ENCODE measurements at regions of chr6 and their contacts with region 1.

Region 1: DNA sequence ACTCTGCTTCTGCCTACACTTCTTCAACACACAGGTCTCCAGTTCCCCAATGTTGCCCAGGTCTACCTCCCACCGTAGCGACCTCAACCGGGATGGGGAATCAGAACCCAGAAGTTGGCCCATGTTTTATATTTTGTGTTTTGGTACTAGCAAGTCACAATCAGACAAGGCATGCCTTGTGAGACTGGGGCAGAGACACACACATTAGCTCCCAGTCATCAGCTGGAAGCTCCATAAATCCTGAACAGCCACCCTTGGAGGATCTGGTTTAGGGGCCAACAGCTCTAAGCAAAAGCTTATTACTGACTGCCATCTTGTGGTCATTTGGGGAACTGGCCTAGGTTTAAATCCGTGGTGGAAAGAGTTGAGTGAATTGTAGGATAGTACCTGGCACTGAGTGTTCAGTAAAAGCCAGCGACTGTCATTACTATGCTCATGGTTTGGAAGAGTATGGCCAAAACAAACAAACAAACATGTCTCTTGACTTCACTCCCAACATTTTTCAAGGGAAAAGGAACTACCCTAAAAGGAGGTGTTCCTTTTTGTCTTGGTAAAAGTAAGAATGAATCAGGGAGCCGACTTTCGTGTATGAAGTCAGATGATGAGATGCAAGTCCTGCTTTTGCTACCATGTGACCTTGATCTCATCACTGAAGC is 40.5 kb downstream of the PIM1 start:
- DNase-seq: peak; percentile 85
- H3K4me3 ChIP-seq: no peak overlapping the region
- H3K27ac ChIP-seq: no peak overlapping the region
- H3K4me1 ChIP-seq: peaks cover 0 to 4% (median 0%) of the 10 kb centered on the region in 4 donors
- H3K27me3 ChIP-seq: no peaks in the 10 kb centered on the region
- CTCF ChIP-seq: peak; percentile 89 to 98 (median 96)
- EP300 ChIP-seq: no peak
- POLR2A ChIP-seq: no peak

Region 2: DNA sequence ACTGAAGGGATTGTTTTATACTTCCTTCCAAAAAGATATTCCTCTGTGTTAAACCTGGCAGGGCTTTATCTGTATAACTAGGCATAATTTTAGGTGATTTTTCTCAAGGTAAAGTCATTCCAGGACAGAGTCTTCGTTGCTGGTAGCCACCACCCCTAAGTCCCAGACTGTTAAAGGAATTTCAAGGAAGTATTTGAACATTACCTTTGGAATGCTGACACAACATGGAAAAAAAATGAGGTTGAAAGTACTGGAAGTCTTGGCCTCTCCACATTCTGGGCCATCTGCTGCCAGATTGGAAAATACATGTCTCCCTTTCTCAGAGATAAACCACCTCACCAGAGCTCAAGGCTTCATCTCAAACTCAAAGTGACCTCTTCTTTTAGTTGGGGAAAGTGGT is 796.0 kb before region 1 on chr6:
- intact Hi-C with region 1: no loop called
- DNase-seq: no peak
- H3K4me3 ChIP-seq: no peak overlapping the region
- H3K27ac ChIP-seq: no peak overlapping the region
- H3K4me1 ChIP-seq: no peaks in the 10 kb centered on the region
- H3K27me3 ChIP-seq: no peaks in the 10 kb centered on the region
- CTCF ChIP-seq: no peak
- EP300 ChIP-seq: no peak
- POLR2A ChIP-seq: no peak

Region 3: GRCh38 chr6:36885461-36886401 is 324.7 kb before region 1 on chr6 and contains the start of gene C6orf89:
- intact Hi-C with region 1: loop called (anchors 1 kb)
- DNase-seq: peak; percentile 99
- H3K4me3 ChIP-seq: peak within 1 kb of the TSS; percentile 69 to 84 (median 78)
- H3K27ac ChIP-seq: peak within 1 kb of the TSS; percentile 85 to 89 (median 87)
- H3K4me1 ChIP-seq: peaks cover 0 to 37% (median 24%) of the 10 kb centered on the region in 4 donors
- H3K27me3 ChIP-seq: no peaks in the 10 kb centered on the region
- CTCF ChIP-seq: peak; percentile 84 to 98 (median 93)
- EP300 ChIP-seq: peak in 1 of 4 donors; percentile 56
- POLR2A ChIP-seq: peak; percentile 66
- total RNA-seq, gene C6orf89: 37.3 to 51.4 (median 44.3) TPM

Region 4: DNA sequence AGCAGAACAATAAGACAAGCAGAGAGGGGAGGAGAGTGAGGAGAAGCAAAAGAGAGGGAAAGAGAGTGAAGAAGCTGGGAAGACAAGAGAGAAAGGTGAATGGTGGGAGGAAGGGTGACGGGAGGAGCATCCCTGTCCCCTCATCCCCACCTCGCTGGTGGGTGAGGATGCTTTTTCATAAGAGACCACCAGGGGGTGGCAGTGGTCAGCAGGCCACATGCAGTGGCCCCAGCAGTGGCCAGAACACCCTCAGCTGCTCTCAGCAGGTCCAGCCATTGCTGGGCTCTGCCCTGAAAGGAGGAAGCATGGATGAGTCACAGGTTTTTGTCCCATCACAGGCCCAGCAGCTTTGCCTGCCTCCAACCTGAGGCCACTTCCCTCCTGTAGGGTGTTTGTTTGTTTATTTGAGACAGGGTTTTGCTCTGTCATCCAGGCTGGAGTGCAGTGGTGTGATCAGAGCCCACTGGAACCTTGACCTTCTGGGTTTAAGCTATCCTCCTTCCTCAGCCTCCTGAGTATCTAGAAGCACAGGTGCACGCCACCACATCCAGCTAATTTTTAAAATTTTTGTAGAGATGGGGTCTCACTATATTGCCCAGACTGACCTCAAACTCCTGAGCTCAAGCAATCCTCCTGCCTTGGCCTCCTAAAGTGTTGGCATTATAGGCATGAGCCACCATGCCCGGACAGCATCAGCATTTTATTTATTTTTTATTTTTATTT is 181.0 kb before region 1 on chr6:
- intact Hi-C with region 1: loop called (anchors 2 kb)
- DNase-seq: peak; percentile 89
- H3K4me3 ChIP-seq: no peak overlapping the region
- H3K27ac ChIP-seq: no peak overlapping the region
- H3K4me1 ChIP-seq: no peaks in the 10 kb centered on the region
- H3K27me3 ChIP-seq: no peaks in the 10 kb centered on the region
- CTCF ChIP-seq: peak; percentile 54 to 68 (median 58)
- EP300 ChIP-seq: no peak
- POLR2A ChIP-seq: no peak

Region 5: DNA sequence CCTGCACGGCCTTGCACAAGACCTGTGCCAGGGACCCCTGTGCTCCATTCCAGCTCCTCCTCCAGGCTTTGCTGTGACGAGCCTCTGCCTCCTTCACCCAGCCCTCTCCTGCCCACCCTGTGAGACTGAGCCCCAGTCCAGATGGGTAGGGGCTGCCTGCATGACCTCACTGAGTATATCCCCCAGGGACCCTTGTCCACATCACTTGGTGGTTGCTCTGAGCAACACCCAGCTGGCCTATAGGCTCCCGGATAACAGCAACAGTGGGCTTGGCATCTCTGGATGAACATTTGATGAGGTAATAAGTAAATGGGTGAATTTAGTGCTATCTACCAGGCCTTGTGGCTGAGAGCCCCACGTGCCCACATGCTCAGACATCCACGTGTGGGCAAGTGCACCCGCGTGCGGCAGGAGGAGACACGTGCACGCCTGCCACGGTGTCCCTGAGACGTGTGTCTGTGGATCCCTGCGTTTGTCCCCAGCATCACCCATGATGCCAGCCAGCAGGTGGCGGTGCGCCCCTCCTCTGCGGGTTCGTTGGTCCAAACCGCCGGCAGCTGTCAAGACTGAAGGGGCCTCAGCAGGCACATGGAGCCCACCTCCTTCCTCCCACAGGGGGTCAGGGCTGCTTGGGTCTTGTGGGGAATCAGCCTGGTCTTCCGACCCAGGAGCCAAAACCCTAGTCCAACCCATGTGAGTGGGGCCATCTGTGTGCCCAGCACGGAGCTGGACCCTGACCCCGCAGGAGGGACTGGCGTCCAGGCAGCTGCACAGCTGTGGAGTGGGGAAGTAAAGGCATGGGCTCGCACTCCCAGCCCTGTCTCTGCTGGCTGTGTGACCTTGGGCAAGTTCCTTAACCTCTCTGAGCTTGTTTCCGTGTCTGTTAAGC is 159.1 kb before region 1 on chr6:
- intact Hi-C with region 1: loop called (anchors 2 kb)
- DNase-seq: peak; percentile 94
- H3K4me3 ChIP-seq: no peak overlapping the region
- H3K27ac ChIP-seq: peak overlapping the region in 1 of 4 donors; percentile 51
- H3K4me1 ChIP-seq: peaks cover 0 to 23% (median 9%) of the 10 kb centered on the region in 4 donors
- H3K27me3 ChIP-seq: no peaks in the 10 kb centered on the region
- CTCF ChIP-seq: peak; percentile 91 to 95 (median 94)
- EP300 ChIP-seq: no peak
- POLR2A ChIP-seq: no peak

Measured in sigmoid colon (tissue), 7 donors.